AG04450 (cell line): ENCODE measurements at regions of chr6 and their contacts with region 1.

Region 1: DNA sequence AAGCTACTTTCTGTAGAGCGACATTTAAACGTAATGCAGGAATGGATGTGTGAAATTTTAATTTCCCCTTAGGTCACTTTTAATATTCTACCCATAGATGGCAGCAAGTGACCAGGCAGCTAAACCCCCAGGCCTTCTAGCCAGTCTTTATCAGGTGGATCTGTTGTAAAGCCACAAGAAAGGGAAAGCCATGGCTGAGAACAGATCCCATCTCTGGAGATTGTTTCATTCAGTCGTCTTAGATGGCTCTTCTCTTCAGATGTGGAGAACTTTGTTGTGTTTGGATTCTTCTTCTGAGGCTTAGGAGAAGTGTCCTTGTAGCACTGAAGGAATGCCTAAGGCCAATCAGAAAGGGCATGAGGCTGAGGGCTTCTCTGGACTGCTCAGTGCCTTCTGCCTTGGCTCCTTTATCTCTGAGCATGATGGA is 15.8 kb upstream of the RNF182 start:
- DNase-seq: peak; percentile 45
- H3K4me3 ChIP-seq: no peak overlapping the region
- H3K27ac ChIP-seq: no peak overlapping the region
- H3K27me3 ChIP-seq: peaks cover 5% of the 10 kb centered on the region
- CTCF ChIP-seq: peak; percentile 89

Region 2: DNA sequence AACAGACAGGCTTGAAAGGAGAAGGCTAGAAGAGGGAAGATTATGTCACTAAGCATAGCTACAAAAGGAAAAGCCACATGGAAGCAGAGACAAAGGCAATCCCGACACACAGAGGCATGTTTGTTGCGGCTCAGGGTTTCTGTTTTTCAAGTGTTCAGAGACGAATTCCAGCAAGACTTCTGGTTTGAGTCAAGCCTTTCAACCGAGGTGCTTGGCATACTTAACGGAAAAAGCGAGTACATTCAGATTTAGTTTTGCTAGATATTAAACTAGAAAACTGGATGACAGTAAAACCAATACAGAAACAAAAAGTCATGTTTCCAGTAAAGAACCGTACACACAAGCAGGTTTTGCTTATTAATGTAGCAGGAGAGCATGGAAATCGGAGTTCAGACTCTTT is 121.8 kb before region 1 on chr6:
- CTCF ChIA-PET with region 1: no interaction called
- POLR2A ChIA-PET with region 1: no interaction called
- DNase-seq: no peak
- H3K4me3 ChIP-seq: no peak overlapping the region
- H3K27ac ChIP-seq: no peak overlapping the region
- H3K27me3 ChIP-seq: no peaks in the 10 kb centered on the region
- CTCF ChIP-seq: no peak

Region 3: GRCh38 chr6:13884397-13884796 is 24.6 kb before region 1 on chr6:
- CTCF ChIA-PET with region 1: interaction called, 17 read pairs
- POLR2A ChIA-PET with region 1: no interaction called
- DNase-seq: no peak
- H3K4me3 ChIP-seq: no peak overlapping the region
- H3K27ac ChIP-seq: no peak overlapping the region
- H3K27me3 ChIP-seq: no peaks in the 10 kb centered on the region
- CTCF ChIP-seq: no peak

Region 4: DNA sequence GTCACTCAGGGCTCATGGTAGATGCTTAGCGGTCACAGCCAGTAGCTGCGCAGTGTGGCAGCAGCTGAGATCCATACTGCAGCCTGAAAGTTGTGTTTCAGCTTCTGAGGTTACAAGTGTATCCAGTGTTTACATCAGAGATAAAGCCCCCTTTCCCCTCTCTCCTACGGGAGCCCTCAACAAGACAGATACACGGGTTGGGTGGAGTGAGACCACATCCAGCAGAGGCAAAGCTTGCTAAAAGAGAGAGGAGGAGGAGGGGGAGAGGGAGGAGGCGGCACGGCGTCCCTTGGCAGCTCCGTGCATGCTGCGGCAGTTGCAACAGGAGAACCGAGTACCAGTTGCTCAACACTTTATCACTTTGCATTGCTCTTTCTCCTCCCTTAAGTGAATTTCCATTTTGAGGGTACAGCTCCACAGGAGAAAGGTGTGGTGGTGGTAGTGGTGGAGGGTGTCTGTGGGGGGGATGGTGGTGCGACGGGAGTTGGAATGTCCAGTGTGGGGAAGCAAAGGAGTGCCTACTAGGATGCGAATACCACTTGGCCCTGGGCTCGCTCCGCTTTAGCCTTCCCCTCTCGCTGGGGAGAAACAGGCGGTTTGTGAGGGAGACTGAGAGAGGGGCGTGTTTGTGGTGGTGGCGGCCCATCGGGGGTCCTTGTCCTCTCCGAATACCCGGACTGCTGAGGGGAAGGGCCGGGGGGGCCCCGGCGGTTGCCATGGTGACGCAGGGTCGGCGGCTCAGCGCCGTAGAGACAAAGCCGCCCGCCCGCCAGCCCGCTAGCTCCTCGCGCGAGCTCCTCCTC is 15.4 kb after region 1 on chr6:
- CTCF ChIA-PET with region 1: interaction called, 35 read pairs
- POLR2A ChIA-PET with region 1: interaction called, 4 read pairs
- DNase-seq: no peak
- H3K4me3 ChIP-seq: peak overlapping the region; percentile 63
- H3K27ac ChIP-seq: peak overlapping the region; percentile 62
- H3K27me3 ChIP-seq: no peaks in the 10 kb centered on the region
- CTCF ChIP-seq: no peak

Region 5: GRCh38 chr6:14046476-14047068 is 137.6 kb after region 1 on chr6:
- CTCF ChIA-PET with region 1: interaction called, 130 read pairs
- POLR2A ChIA-PET with region 1: no interaction called
- DNase-seq: no peak
- H3K4me3 ChIP-seq: no peak overlapping the region
- H3K27ac ChIP-seq: no peak overlapping the region
- H3K27me3 ChIP-seq: no peaks in the 10 kb centered on the region
- CTCF ChIP-seq: peak; percentile 84

Region 6: GRCh38 chr6:14075095-14075503 is 166.1 kb after region 1 on chr6:
- CTCF ChIA-PET with region 1: interaction called, 19 read pairs
- POLR2A ChIA-PET with region 1: no interaction called
- DNase-seq: no peak
- H3K4me3 ChIP-seq: peak overlapping the region; percentile 47
- H3K27ac ChIP-seq: no peak overlapping the region
- H3K27me3 ChIP-seq: no peaks in the 10 kb centered on the region
- CTCF ChIP-seq: no peak